ENCODE measurements at regions of chr9 and their contacts with region 1.

Region 1: DNA sequence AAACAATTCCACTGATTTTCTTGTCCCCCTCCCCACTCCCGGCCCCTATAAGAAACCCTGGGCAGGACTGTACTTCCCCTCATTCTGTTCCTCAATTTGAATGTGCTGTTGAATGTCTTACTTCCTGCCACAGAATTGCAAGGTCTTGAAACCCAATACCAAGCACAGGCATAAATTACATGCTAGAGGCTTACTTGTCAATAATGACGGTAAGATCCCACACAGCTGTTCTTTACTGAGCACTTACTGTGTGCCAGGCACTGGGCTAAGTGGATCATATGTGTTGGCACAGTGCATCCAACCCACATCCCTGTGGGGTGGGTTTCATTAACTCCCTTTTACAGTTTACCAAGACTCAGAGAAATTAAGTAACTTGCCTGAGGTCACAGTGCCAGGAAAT is 63.4 kb downstream of the MVB12B start:
- DNase-seq: no peak
- ATAC-seq: peak; percentile 34

Region 2: GRCh38 chr9:125922854-125923253 is 467.1 kb before region 1 on chr9:
- intact Hi-C with region 1: no loop called
- DNase-seq: no peak
- ATAC-seq: no peak

Region 3: GRCh38 chr9:126326228-126327005 is 63.6 kb before region 1 on chr9 and contains the start of gene MVB12B:
- intact Hi-C with region 1: loop called (anchors 5 kb)
- DNase-seq: peak; percentile 79
- ATAC-seq: peak; percentile 48
- total RNA-seq, gene MVB12B: 12.7 TPM

Measured in Right ventricle myocardium inferior (tissue), 1 donor.